ENCODE measurements at regions of chr1 and their contacts with region 1.

Region 1: GRCh38 chr1:28965271-28965870 is 51.0 kb downstream of the EPB41 start:
- DNase-seq: no peak
- H3K4me3 Mint-ChIP-seq: no peak overlapping the region
- H3K27ac Mint-ChIP-seq: no peak overlapping the region
- H3K4me1 Mint-ChIP-seq: peaks cover 25% of the 10 kb centered on the region
- H3K27me3 Mint-ChIP-seq: no peaks in the 10 kb centered on the region

Region 2: GRCh38 chr1:28606762-28607161 is 358.6 kb before region 1 on chr1:
- intact Hi-C with region 1: no loop called
- DNase-seq: no peak
- H3K4me3 Mint-ChIP-seq: no peak overlapping the region
- H3K27ac Mint-ChIP-seq: no peak overlapping the region
- H3K4me1 Mint-ChIP-seq: peaks cover 6% of the 10 kb centered on the region
- H3K27me3 Mint-ChIP-seq: no peaks in the 10 kb centered on the region

Region 3: DNA sequence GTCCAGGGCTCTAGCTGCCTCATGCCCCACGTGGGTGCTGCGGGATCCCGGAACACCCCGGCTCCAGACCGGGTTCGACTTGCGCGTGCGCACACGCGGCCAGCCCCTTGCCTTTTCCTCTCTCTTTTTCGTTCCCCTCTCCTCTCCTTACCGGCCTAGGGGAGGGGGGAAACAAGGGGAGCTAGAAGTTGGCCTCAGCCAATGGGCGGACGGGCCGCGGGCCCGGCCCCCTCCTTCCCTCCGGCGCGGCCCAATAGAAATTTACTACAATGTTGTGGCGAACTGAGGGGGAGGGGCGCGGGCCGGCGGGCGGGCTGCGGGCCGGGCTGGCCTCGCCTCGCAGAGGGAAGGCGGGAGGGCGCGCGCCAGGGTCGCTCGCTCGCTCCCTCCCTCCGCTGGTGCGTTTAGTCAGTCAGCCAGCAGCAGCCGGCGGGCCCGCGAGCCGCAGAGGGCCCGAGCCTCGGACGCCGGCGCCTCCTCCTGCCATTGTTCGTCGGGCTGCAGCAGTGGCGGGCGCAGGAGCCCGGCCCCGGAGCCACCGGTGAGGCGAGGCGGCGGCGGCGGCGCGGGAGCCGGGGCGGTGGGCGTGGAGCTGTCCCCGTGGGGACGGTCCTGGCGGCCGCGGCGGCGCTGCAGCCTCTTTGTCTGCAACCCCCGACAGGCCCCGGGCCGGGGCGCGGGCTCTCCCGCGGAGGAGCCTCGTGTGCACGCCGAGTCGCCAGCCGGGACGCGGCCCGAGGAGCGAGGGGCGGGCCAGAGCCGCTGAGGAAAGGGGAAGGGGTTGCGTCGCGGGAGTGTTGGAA is 50.9 kb before region 1 on chr1 and contains the start of gene EPB41:
- intact Hi-C with region 1: loop called (anchors 1 kb)
- DNase-seq: peak; percentile 88
- H3K4me3 Mint-ChIP-seq: peak within 1 kb of the TSS; percentile 96
- H3K27ac Mint-ChIP-seq: peak within 1 kb of the TSS; percentile 92
- H3K4me1 Mint-ChIP-seq: peaks cover 51% of the 10 kb centered on the region
- H3K27me3 Mint-ChIP-seq: no peaks in the 10 kb centered on the region
- total RNA-seq, gene EPB41: 70.0 and 74.9 TPM in 2 replicates

Region 4: GRCh38 chr1:28926629-28927265 is 38.6 kb before region 1 on chr1:
- intact Hi-C with region 1: loop called (anchors 1 kb)
- DNase-seq: peak; percentile 57
- H3K4me3 Mint-ChIP-seq: peak overlapping the region; percentile 59
- H3K27ac Mint-ChIP-seq: peak overlapping the region; percentile 84
- H3K4me1 Mint-ChIP-seq: peaks cover 45% of the 10 kb centered on the region
- H3K27me3 Mint-ChIP-seq: no peaks in the 10 kb centered on the region

Region 5: GRCh38 chr1:29062157-29062942 is 97.0 kb after region 1 on chr1:
- intact Hi-C with region 1: loop called (anchors 1 kb)
- DNase-seq: no peak
- H3K4me3 Mint-ChIP-seq: peak overlapping the region; percentile 46
- H3K27ac Mint-ChIP-seq: peak overlapping the region; percentile 97
- H3K4me1 Mint-ChIP-seq: peaks cover 23% of the 10 kb centered on the region
- H3K27me3 Mint-ChIP-seq: no peaks in the 10 kb centered on the region

Measured in activated T-helper 1 cell treated with anti-CD3 and anti-CD28 coated beads, Interleukin-12 subunit alpha, Interleukin-12 subunit beta, Interleukin-2, Interleukin-4 antibody, amounts not matched to agents 30 ng/mL and 10 ng/mL and 1 ng/mL, durations not matched to agents 14 hours and 24 hours and 36 hours (primary cell).